Activated T-helper 1 cell treated with anti-CD3 and anti-CD28 coated beads, Interleukin-12 subunit alpha, Interleukin-12 subunit beta, Interleukin-2, Interleukin-4 antibody, amounts not matched to agents 30 ng/mL and 10 ng/mL and 1 ng/mL, durations not matched to agents 14 hours and 24 hours and 36 hours (primary cell): ENCODE measurements at regions of chrX and their contacts with region 1.

Region 1: GRCh38 chrX:115616943-115617563 is 56.1 kb downstream of the PLS3 start:
- DNase-seq: no peak
- H3K4me3 Mint-ChIP-seq: no peak overlapping the region
- H3K27ac Mint-ChIP-seq: no peak overlapping the region
- H3K4me1 Mint-ChIP-seq: no peaks in the 10 kb centered on the region
- H3K27me3 Mint-ChIP-seq: no peaks in the 10 kb centered on the region

Region 2: GRCh38 chrX:115467961-115468360 is 149.1 kb before region 1 on chrX:
- intact Hi-C with region 1: no loop called
- DNase-seq: no peak
- H3K4me3 Mint-ChIP-seq: no peak overlapping the region
- H3K27ac Mint-ChIP-seq: no peak overlapping the region
- H3K4me1 Mint-ChIP-seq: no peaks in the 10 kb centered on the region
- H3K27me3 Mint-ChIP-seq: no peaks in the 10 kb centered on the region

Region 3: DNA sequence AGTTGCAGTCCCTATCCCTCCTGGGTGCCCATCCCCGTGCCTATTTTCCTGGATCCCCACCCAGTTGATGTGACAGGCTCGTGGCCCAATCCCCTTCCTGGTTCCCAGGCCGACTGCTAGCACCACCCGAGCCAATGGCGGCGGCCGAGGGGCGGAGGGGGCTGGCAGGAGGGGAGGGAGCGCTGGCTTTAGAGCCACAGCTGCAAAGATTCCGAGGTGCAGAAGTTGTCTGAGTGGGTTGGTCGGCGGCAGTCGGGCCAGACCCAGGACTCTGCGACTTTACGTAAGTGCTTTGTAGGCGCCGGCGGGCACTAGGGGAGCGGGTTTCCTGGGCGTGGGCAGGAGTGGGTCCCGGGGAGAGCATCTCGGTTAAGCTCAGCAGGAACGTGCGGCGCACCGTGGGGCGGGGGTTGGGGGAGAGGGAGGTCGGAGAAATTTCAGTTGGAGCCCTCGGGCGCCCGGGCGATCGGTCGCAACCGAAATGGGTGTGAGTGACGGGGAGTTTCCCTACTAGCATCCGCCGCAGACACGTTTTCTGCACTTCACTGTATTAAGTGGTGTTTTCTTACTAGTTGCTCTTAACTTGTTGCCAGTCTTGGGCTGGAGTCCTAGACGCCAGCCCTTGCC is 56.0 kb before region 1 on chrX and contains the start of gene PLS3:
- intact Hi-C with region 1: loop called (anchors 1 kb)
- DNase-seq: peak; percentile 0
- H3K4me3 Mint-ChIP-seq: peak within 1 kb of the TSS; percentile 67
- H3K27ac Mint-ChIP-seq: no peak within 1 kb of the TSS
- H3K4me1 Mint-ChIP-seq: no peaks in the 10 kb centered on the region
- H3K27me3 Mint-ChIP-seq: peaks cover 10% of the 10 kb centered on the region
- total RNA-seq, gene PLS3: 1.4 TPM in 2 replicates

Region 4: DNA sequence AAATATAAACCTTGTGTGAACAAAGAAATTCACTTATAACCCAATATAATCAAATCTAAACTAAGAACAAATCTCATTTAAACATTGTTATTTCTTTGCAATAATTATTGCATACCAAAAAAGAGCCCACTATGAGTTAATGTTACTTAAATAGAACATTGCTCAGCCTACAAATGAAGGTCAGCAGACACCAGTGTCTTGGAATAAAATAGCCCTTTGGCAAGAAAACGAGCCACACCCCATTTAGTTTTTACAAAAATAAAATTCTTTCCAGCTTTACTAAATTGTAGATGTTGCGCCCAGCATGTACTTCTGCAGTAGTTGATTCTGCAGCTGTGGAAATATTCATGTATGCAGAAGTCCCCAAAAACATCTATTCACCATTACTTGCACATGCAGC is 43.9 kb before region 1 on chrX:
- intact Hi-C with region 1: no loop called
- DNase-seq: no peak
- H3K4me3 Mint-ChIP-seq: no peak overlapping the region
- H3K27ac Mint-ChIP-seq: no peak overlapping the region
- H3K4me1 Mint-ChIP-seq: no peaks in the 10 kb centered on the region
- H3K27me3 Mint-ChIP-seq: no peaks in the 10 kb centered on the region

Region 5: DNA sequence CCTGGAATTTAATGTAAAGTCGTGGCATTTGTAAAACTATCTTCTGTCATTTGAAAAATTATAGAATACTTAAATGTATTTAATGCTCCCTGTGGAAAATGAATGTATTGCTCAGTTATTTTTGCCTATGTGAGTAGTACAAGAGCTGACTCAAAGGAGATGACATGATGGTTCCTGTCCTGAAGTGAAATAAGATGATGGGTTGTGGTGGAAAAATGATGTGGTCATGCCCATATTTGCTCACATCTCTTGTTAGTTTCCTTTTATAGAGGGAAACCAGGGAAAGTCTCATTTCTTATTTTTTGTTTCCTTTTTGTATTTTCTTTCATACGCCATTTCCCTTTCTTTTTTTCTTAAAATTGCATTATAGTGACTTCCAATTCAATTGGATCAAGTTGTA is 32.4 kb before region 1 on chrX:
- intact Hi-C with region 1: loop called (anchors 2 kb)
- DNase-seq: no peak
- H3K4me3 Mint-ChIP-seq: no peak overlapping the region
- H3K27ac Mint-ChIP-seq: no peak overlapping the region
- H3K4me1 Mint-ChIP-seq: no peaks in the 10 kb centered on the region
- H3K27me3 Mint-ChIP-seq: no peaks in the 10 kb centered on the region